Mammary epithelial cell (primary cell): ENCODE measurements at regions of chr1 and their contacts with region 1.

Region 1: GRCh38 chr1:65309304-65310077 is at the start of gene DNAJC6:
- DNase-seq: peak; percentile 63
- H3K4me3 ChIP-seq: peak within 1 kb of the TSS; percentile 50 to 76 (median 55)
- H3K27ac ChIP-seq: no peak within 1 kb of the TSS
- H3K4me1 ChIP-seq: no peaks in the 10 kb centered on the region
- H3K27me3 ChIP-seq: no peaks in the 10 kb centered on the region
- CTCF ChIP-seq: no peak
- total RNA-seq, gene DNAJC6: 6.6 to 28.5 TPM

Region 2: GRCh38 chr1:65254319-65255034 is 55.0 kb before region 1 on chr1:
- CTCF ChIA-PET with region 1: interaction called, 10 read pairs
- dilution Hi-C with region 1: no loop called
- in situ Hi-C with region 1: no loop called
- intact Hi-C with region 1: no loop called
- DNase-seq: peak; percentile 68
- H3K4me3 ChIP-seq: peak overlapping the region; percentile 64 to 87 (median 78)
- H3K27ac ChIP-seq: peak overlapping the region; percentile 37
- H3K4me1 ChIP-seq: peaks cover 19% of the 10 kb centered on the region
- H3K27me3 ChIP-seq: no peaks in the 10 kb centered on the region
- CTCF ChIP-seq: no peak

Region 3: DNA sequence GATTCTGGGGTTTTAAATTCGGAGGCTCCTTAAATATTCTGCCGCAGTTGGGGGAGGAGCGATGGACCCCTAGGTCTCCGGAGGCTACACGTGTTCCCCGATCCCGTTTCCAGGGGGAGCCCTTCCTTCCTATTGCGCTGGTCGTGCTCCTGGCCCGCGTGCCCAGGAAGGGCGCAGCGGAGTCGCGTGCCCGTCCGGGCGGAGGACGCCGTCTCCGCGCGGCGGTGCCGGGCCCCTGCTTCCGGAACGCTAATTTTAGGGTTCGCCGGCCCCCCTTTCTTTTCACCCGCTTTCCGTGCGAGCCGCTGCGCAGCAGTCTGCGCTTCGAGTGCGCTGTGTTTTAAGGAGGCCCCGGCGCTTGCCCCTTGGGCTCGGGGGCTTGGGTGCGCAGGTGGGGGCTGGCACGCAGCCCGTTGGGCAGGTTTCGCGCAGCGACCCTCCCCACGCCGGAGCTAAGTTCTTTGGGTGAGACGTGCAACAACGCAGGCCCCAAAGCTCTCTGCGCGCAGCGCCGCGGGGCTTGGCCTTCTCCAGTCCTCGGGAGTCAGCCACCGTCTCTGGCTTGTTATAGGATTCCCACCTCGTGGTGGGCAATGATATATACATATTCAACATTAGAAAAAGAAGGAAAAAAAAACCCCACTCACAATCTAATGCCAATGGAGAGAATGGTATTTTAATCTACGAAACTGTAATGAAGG is 43.7 kb before region 1 on chr1:
- CTCF ChIA-PET with region 1: interaction called, 5 read pairs
- dilution Hi-C with region 1: no loop called
- in situ Hi-C with region 1: no loop called
- intact Hi-C with region 1: loop called (anchors 5 kb)
- DNase-seq: peak; percentile 46
- H3K4me3 ChIP-seq: peak overlapping the region; percentile 43 to 47 (median 46)
- H3K27ac ChIP-seq: no peak overlapping the region
- H3K4me1 ChIP-seq: peaks cover 15% of the 10 kb centered on the region
- H3K27me3 ChIP-seq: no peaks in the 10 kb centered on the region
- CTCF ChIP-seq: peak; percentile 8 to 55

Region 4: DNA sequence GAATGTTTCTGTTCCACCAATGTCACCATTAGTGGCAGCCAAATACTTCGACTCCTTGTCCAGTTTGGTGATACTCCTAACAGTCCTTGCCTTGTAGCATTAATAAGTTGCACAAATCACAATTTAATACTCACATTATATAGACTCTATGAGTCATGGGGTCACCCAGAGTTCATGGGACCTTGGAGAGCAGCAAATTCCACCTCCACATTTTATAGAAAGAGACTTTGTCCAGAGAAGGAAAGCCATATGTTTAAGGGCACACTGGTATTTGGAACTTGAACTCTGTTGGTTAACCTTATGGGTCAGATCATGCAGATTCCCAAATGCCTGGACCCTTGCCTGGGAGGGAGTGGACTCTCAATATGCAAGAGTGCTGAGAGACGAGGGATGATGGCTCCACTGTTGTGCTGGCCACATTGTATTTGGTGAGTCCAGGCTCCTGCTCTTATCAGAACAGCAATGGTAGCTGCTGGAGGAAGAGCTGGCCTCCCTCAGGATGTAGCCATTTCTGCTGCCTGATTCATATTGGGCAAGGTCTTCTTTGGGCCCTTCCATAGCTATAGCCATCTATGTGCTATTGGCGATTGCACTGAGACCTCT is 30.5 kb after region 1 on chr1:
- CTCF ChIA-PET with region 1: no interaction called
- dilution Hi-C with region 1: no loop called
- in situ Hi-C with region 1: no loop called
- intact Hi-C with region 1: loop called (anchors 2 kb)
- DNase-seq: peak; percentile 42
- H3K4me3 ChIP-seq: no peak overlapping the region
- H3K27ac ChIP-seq: no peak overlapping the region
- H3K4me1 ChIP-seq: peaks cover 30% of the 10 kb centered on the region
- H3K27me3 ChIP-seq: no peaks in the 10 kb centered on the region
- CTCF ChIP-seq: no peak

Region 5: DNA sequence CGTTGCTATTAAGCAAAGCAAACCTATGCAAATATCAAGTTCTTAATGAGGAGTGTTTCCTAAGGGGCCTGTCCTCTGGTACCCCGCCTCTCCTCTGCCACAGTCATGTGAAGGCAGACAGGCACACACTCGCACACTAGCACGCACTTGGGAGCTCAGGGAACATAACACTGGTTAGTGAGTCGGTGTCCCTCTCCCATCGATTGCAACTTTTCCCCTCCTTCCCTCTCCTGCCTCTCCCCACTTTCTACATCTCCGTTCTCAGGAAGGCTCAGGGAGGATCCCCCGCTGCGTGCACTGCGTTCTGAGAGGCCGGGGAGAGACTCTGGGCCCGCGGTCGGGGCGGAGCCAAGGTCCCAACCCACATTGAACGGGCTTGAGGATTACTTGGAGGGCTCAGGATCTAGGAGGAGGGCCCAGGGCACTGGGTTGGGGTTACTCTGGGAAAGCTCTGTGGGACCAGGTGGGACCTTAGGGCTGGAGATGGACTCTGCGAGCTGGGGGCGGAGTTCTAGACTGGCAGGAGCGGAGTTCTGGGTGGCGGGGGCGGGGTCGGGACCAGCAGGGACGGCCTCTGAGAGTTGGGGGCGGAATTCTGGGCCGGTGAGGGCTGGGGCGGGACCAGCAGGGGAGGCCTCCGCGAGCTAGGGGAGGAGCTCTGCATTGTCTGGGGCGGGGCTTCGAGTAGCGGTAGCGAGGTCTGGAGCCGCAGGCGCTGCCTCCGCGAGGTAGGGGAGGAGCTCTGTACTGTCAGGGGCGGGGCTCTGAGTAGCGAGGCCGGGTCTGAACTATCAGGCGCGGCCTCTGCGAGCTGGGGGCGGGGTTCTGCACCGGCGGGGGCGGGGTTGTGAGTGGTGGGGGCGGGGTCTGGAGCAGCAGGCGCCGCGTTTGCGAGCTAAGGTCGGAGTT is 110.4 kb after region 1 on chr1:
- CTCF ChIA-PET with region 1: interaction called, 3 read pairs
- dilution Hi-C with region 1: no loop called
- in situ Hi-C with region 1: no loop called
- intact Hi-C with region 1: loop called (anchors 5 kb)
- DNase-seq: peak; percentile 96
- H3K4me3 ChIP-seq: peak overlapping the region; percentile 46 to 50 (median 49)
- H3K27ac ChIP-seq: peak overlapping the region; percentile 75
- H3K4me1 ChIP-seq: peaks cover 58% of the 10 kb centered on the region
- H3K27me3 ChIP-seq: no peaks in the 10 kb centered on the region
- CTCF ChIP-seq: no peak